ENCODE measurements at regions of chr6 and their contacts with region 1.

Region 1: DNA sequence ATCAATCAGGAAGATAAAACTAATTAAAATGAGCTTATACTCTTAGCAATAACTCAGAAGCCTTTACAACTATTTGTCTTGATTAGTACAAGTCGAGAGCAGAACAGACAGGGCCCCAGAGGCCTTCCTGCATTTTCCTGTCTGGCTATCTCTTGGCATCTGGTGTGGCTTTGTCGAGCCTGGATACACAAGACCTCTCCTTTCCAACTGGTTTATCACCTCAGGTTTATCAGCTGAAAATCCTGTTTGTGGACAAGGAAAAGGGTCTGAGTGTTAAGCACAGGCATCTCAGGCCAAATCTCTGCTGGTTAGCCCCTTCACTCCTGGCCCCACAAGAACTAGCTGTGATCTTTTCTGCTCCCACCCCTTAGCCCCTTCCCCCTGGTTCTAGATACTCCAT is 32.6 kb downstream of the BAK1 start:
- DNase-seq: no peak
- ATAC-seq: no peak
- H3K4me3 ChIP-seq: no peak overlapping the region
- H3K27ac ChIP-seq: no peak overlapping the region
- H3K4me1 ChIP-seq: no peaks in the 10 kb centered on the region
- H3K27me3 ChIP-seq: no peaks in the 10 kb centered on the region
- CTCF ChIP-seq: no peak

Region 2: DNA sequence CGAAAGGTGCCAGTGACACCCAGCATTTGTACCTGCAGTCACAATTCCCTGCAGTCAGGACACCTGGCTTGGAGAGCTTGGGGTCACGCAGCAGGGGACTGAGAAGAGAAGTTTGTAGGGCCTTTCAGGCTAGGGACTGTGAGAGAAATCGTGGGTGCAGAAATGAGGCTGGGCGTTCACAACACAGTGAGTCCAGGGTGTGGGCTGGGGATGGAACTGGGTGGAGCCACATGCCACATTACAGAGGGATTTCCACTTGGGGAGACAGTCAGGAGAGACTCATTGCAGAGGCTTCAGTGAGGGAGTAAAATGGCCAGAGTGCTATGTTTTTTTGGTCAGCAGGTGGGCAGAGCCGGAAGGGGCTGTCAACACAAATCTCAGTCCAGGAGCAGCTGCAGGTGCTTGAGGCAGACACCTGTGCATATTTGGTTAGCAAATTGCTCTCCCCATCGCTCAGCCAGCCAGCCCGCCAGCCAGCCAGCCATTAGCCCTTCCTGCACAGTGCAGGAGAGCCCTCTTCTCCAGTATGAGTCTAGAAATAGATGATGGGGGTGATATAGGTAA is 81.0 kb after region 1 on chr6:
- CTCF ChIA-PET with region 1: no interaction called
- POLR2A ChIA-PET with region 1: interaction called, 17 read pairs
- in situ Hi-C with region 1: no loop called
- intact Hi-C with region 1: no loop called
- DNase-seq: no peak
- ATAC-seq: no peak
- H3K4me3 ChIP-seq: no peak overlapping the region
- H3K27ac ChIP-seq: no peak overlapping the region
- H3K4me1 ChIP-seq: peaks cover 19% of the 10 kb centered on the region
- H3K27me3 ChIP-seq: no peaks in the 10 kb centered on the region
- CTCF ChIP-seq: no peak

Region 3: DNA sequence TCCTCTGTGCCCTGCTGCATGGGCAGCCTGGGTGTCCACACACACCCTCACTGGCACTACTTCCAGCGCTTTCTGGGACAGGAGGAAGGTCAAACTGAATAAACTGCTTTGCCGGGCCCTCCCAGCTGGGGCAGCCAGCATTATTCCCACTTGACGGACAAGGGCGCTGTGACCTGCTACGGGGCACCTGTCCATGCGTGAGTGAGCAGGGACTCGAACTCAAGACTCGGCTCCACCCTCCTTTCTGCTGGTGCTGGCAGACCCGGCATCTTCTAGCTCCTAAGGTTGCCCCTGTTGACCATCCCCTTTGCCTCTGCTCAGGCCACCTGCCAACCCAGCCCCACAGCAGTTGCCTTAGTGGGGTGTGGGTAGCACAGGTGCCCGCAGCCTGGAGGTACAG is 1003.4 kb after region 1 on chr6:
- CTCF ChIA-PET with region 1: no interaction called
- POLR2A ChIA-PET with region 1: interaction called, 17 read pairs
- in situ Hi-C with region 1: no loop called
- intact Hi-C with region 1: no loop called
- DNase-seq: no peak
- ATAC-seq: no peak
- H3K4me3 ChIP-seq: no peak overlapping the region
- H3K27ac ChIP-seq: no peak overlapping the region
- H3K4me1 ChIP-seq: peaks cover 23% of the 10 kb centered on the region
- H3K27me3 ChIP-seq: no peaks in the 10 kb centered on the region
- CTCF ChIP-seq: no peak

Measured in Panc1 (cell line).